ENCODE measurements at regions of chr21 and their contacts with region 1.

Region 1: GRCh38 chr21:46323227-46324128 is at the start of gene C21orf58:
- DNase-seq: peak; percentile 97 to 99 (median 99)
- H3K4me3 ChIP-seq: peak within 1 kb of the TSS; percentile 73 to 93
- H3K4me3 Mint-ChIP-seq: peak within 1 kb of the TSS; percentile 94 to 98 (median 96)
- H3K27ac ChIP-seq: peak within 1 kb of the TSS; percentile 94
- H3K27ac Mint-ChIP-seq: peak within 1 kb of the TSS; percentile 91 to 99 (median 99)
- H3K4me1 ChIP-seq: peaks cover 28% of the 10 kb centered on the region
- H3K4me1 Mint-ChIP-seq: peaks cover 15 to 44% (median 28%) of the 10 kb centered on the region in 4 donors
- H3K27me3 ChIP-seq: no peaks in the 10 kb centered on the region
- H3K27me3 Mint-ChIP-seq: no peaks in the 10 kb centered on the region
- total RNA-seq, gene C21orf58: 8.2 to 9.4 TPM

Region 2: GRCh38 chr21:45973659-45974072 is 349.8 kb before region 1 on chr21:
- CTCF ChIA-PET with region 1: no interaction called
- POLR2A ChIA-PET with region 1: no interaction called
- intact Hi-C with region 1: loop called (anchors 10 kb)
- DNase-seq: peak; percentile 64 to 81 (median 73)
- H3K4me3 ChIP-seq: peak overlapping the region; percentile 52 to 63
- H3K4me3 Mint-ChIP-seq: peak overlapping the region; percentile 87 to 96 (median 90)
- H3K27ac ChIP-seq: no peak overlapping the region
- H3K27ac Mint-ChIP-seq: peak overlapping the region; percentile 53 to 84 (median 68)
- H3K4me1 ChIP-seq: peaks cover 39% of the 10 kb centered on the region
- H3K4me1 Mint-ChIP-seq: peaks cover 3 to 30% (median 7%) of the 10 kb centered on the region in 4 donors
- H3K27me3 ChIP-seq: peaks cover 35% of the 10 kb centered on the region
- H3K27me3 Mint-ChIP-seq: peaks cover 9 to 22% of the 10 kb centered on the region in 2 donors

Region 3: GRCh38 chr21:46144464-46145070 is 178.9 kb before region 1 on chr21:
- CTCF ChIA-PET with region 1: interaction called, 11 read pairs
- POLR2A ChIA-PET with region 1: interaction called, 4 read pairs
- intact Hi-C with region 1: loop called (anchors 1 kb)
- DNase-seq: no peak
- H3K4me3 ChIP-seq: no peak overlapping the region
- H3K4me3 Mint-ChIP-seq: peak overlapping the region in 3 of 8 donors; percentile 15 to 49 (median 38)
- H3K27ac ChIP-seq: no peak overlapping the region
- H3K27ac Mint-ChIP-seq: peak overlapping the region in 4 of 7 donors; percentile 2 to 85 (median 60)
- H3K4me1 ChIP-seq: peaks cover 5% of the 10 kb centered on the region
- H3K4me1 Mint-ChIP-seq: peaks cover 4 to 8% (median 5%) of the 10 kb centered on the region in 4 donors
- H3K27me3 ChIP-seq: no peaks in the 10 kb centered on the region
- H3K27me3 Mint-ChIP-seq: no peaks in the 10 kb centered on the region

Region 4: GRCh38 chr21:46184625-46185555 is 138.6 kb before region 1 on chr21:
- CTCF ChIA-PET with region 1: no interaction called
- POLR2A ChIA-PET with region 1: no interaction called
- intact Hi-C with region 1: no loop called
- DNase-seq: peak; percentile 63 to 80 (median 66)
- H3K4me3 ChIP-seq: peak overlapping the region; percentile 42
- H3K4me3 Mint-ChIP-seq: peak overlapping the region; percentile 76 to 91 (median 84)
- H3K27ac ChIP-seq: peak overlapping the region; percentile 53
- H3K27ac Mint-ChIP-seq: peak overlapping the region; percentile 19 to 88 (median 77)
- H3K4me1 ChIP-seq: peaks cover 5% of the 10 kb centered on the region
- H3K4me1 Mint-ChIP-seq: peaks cover 1 to 11% (median 6%) of the 10 kb centered on the region in 4 donors
- H3K27me3 ChIP-seq: peaks cover 4% of the 10 kb centered on the region
- H3K27me3 Mint-ChIP-seq: peaks cover 2 to 3% of the 10 kb centered on the region in 2 donors

Region 5: DNA sequence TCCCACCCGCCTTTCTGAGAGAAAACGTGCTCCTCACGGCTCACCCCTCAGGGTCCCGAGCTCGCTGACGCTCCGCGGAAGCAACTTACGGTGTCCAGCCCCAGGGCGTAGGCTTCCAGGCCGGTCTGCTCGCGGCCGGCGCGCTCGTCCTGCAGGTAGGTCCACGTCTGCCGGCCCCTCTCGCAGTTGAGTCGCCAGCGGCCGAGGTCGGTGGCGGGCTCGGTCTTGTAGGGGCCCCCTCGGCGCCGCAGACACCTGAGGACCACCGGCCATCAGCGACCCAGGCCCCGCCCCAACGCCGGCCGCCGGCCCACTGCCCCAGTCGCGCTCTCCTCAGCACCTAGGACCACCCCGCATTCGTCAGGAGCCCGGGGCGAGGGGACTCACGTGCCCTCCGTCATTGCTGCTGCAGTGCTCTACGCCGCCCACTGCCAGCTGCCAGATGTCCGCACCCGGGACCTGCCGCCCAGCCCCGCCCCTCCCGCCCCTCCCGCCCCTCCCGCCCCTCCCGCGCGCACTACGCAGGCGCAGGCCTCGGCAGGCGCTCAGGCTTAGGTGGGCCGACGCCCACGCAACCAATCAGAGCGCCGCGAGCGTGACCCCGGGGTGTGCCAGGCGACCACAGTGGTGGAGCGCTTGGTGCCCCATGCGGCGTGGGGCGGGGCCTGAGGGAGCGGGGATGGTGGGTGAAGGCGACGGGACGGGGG is 95.0 kb before region 1 on chr21 and contains the start of gene LSS:
- CTCF ChIA-PET with region 1: interaction called, 3 read pairs
- POLR2A ChIA-PET with region 1: interaction called, 3 read pairs
- intact Hi-C with region 1: loop called (anchors 1 kb)
- DNase-seq: peak; percentile 96 to 98 (median 98)
- H3K4me3 ChIP-seq: peak within 1 kb of the TSS; percentile 65 to 72
- H3K4me3 Mint-ChIP-seq: peak within 1 kb of the TSS; percentile 91 to 98 (median 96)
- H3K27ac ChIP-seq: peak within 1 kb of the TSS; percentile 76
- H3K27ac Mint-ChIP-seq: peak within 1 kb of the TSS; percentile 61 to 99 (median 97)
- H3K4me1 ChIP-seq: peaks cover 28% of the 10 kb centered on the region
- H3K4me1 Mint-ChIP-seq: peaks cover 30 to 56% (median 44%) of the 10 kb centered on the region in 4 donors
- H3K27me3 ChIP-seq: no peaks in the 10 kb centered on the region
- H3K27me3 Mint-ChIP-seq: no peaks in the 10 kb centered on the region
- total RNA-seq, gene LSS: 53.2 to 54.5 TPM

Region 6: DNA sequence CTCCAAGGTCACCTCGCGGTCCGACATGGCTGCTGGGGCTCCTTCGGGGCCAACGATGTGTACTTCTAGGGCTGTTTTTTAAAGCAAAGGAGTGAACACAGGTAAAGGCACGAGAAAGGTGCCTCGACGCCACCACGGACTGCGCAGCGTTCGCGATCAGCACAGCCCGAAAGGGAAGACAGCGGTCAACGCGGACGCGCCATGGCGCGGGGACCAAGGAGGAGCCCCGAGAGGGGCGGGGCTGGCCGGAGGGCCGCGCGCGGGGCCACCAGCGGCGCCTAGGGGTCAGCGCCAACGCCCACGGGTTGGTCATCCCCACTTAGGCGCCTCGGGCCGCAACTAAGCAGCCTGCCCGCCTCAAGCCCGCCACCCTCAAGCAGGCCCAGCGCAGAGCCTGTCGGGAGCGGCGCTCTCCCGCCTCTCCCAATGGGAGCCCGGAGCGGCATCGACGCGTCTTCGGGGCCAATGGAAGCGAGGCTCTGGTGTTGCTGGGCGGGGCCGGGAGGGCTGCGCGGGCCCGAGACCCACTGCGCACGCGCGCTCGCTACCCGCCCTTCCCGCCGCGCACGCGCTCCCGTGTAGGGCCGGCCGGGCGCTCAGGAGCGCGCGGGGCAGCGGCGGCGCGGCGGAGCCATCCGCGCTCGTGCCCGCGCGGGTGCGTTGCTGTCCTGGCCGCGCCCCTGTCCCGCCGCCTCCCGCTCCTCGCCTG is 135.0 kb after region 1 on chr21 and contains the start of gene DIP2A:
- CTCF ChIA-PET with region 1: no interaction called
- POLR2A ChIA-PET with region 1: interaction called, 4 read pairs
- intact Hi-C with region 1: loop called (anchors 1 kb)
- DNase-seq: peak; percentile 95 to 97 (median 96)
- H3K4me3 ChIP-seq: peak within 1 kb of the TSS; percentile 89 to 100
- H3K4me3 Mint-ChIP-seq: peak within 1 kb of the TSS; percentile 88 to 93 (median 92)
- H3K27ac ChIP-seq: peak within 1 kb of the TSS; percentile 74
- H3K27ac Mint-ChIP-seq: peak within 1 kb of the TSS; percentile 90 to 95 (median 94)
- H3K4me1 ChIP-seq: peaks cover 42% of the 10 kb centered on the region
- H3K4me1 Mint-ChIP-seq: peaks cover 28 to 60% (median 44%) of the 10 kb centered on the region in 4 donors
- H3K27me3 ChIP-seq: no peaks in the 10 kb centered on the region
- H3K27me3 Mint-ChIP-seq: no peaks in the 10 kb centered on the region
- total RNA-seq, gene DIP2A: 94.6 to 95.9 TPM

Measured in CD4-positive, alpha-beta memory T cell (primary cell).